Breast epithelium (tissue), 4 donors: ENCODE measurements at regions of chr5 and their contacts with region 1.

Region 1: GRCh38 chr5:54285686-54286085 is 24.7 kb downstream of the ARL15 start:
- DNase-seq: no peak
- H3K4me3 ChIP-seq: no peak overlapping the region
- H3K27ac ChIP-seq: no peak overlapping the region
- H3K4me1 ChIP-seq: peaks cover 0 to 4% of the 10 kb centered on the region in 2 donors
- H3K27me3 ChIP-seq: no peaks in the 10 kb centered on the region
- CTCF ChIP-seq: no peak
- POLR2A ChIP-seq: no peak

Region 2: DNA sequence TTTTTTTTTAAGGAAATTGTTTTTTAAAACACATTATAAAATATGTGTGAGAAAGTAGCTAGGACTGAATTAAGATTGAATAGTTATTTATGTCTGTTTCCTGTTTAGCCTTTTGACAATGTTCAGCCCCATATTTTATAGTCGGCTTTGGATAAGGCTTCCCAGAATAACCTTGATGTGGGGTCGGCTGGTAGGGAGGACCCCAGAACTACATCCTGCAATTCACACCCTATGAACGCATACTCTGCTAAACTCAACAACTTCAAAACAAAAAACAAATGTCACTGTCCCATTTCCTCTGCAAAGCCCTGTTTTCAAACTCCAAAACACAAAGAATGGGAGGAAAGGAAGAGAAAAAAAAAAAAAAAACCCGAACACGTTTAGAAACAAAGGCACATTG is 38.5 kb before region 1 on chr5:
- intact Hi-C with region 1: loop called (anchors 2 kb)
- DNase-seq: no peak
- H3K4me3 ChIP-seq: no peak overlapping the region
- H3K27ac ChIP-seq: no peak overlapping the region
- H3K4me1 ChIP-seq: no peaks in the 10 kb centered on the region
- H3K27me3 ChIP-seq: no peaks in the 10 kb centered on the region
- CTCF ChIP-seq: no peak
- POLR2A ChIP-seq: no peak

Region 3: DNA sequence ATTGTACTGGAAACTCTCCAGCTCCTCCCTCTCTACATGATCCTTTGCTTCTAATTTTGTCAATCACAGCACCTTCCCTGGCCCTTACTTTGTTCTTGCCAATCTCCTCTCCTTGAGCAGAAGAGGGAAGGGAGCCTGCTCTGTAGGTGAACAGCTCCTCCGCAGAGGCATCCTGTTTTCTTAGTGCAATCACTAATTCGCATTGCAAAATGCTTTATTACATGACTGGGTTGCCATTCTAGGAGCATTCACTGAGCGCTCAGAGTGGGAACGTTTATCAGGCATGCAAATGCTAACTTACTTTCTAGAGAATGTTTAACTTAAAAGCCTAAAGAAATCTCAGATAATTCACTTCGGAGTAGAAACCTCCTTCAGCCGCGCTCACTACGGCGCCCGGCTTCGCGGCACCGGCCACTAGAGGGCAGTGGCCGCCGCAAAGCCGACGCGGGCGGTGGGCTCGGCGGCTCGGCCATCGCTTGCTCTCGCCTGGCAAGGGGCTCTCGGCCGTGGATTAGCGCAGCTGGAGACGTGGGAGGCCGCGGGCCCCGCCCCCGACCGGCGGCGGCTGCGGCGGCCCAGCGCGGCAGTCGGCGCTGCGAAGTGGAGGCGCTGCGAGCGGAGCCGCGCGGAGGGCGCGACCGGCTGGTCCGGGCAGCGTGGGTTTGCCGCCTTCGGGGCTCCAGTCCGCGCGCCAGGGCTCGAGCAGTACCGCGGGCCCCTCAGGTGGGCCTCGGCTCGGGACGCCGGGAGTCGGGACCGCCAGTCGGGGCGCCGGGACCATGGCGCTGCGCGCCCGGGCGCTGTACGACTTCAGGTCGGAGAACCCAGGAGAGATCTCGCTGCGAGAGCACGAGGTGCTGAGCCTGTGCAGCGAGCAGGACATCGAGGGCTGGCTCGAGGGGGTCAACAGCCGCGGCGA is 231.7 kb after region 1 on chr5 and contains the start of gene SNX18:
- intact Hi-C with region 1: no loop called
- DNase-seq: peak; percentile 87
- H3K4me3 ChIP-seq: peak within 1 kb of the TSS; percentile 62 to 95 (median 85)
- H3K27ac ChIP-seq: peak within 1 kb of the TSS; percentile 95 to 97
- H3K4me1 ChIP-seq: peaks cover 6 to 8% of the 10 kb centered on the region in 2 donors
- H3K27me3 ChIP-seq: no peaks in the 10 kb centered on the region
- CTCF ChIP-seq: peak; percentile 93 to 99 (median 94)
- POLR2A ChIP-seq: no peak
- total RNA-seq, gene SNX18: 29.2 to 37.3 (median 33.1) TPM